Ascending aorta (tissue), 2 donors: ENCODE measurements at regions of chr17 and their contacts with region 1.

Region 1: DNA sequence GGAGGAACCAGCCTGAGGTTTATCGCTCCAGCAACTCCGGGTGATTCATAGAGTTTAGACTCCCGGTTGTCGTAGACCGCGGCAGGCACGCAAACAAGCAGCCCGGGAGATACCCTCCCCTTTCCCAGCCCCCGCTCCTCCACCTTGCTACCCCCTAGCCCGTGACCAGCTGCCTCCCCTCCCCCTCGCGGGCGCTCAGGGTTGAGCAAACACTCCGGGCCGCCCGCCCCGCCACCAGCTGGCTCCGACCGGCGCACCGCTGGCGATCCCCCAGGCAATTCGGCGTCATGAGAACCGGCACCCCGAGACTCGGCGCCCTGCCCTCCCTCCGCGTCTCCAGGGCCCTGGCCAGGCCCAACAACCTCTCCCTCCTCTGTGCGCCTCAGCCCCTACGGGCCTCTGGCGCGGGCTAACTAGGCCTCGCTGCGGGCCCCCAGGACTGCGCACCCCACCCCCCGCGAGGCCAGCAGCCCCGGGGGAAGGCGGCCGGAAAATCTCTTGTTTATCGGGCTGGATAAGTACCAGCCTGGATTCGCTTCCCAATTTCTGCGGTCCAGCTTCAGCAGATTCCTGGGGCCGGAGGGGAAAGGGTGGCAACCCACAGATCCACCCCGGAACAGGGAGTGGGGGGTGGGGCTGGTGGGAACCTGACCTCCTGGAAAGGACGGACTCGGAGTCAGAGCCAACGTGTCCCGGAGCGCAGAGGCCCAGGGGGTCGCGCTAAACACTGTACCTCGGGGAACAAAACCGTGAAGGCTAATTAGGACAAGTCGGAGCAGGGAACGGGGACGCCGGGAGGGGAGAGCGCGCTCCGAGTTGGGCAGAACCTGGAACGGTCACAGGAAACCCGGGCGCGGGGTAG is 951 bp upstream of the GPRC5C start:
- DNase-seq: peak; percentile 81 to 93
- H3K4me3 ChIP-seq: peak overlapping the region; percentile 68 to 95
- H3K27ac ChIP-seq: peak overlapping the region; percentile 97 to 99
- H3K4me1 ChIP-seq: peaks cover 9 to 45% of the 10 kb centered on the region in 2 donors
- H3K27me3 ChIP-seq: no peaks in the 10 kb centered on the region
- CTCF ChIP-seq: no peak

Region 2: DNA sequence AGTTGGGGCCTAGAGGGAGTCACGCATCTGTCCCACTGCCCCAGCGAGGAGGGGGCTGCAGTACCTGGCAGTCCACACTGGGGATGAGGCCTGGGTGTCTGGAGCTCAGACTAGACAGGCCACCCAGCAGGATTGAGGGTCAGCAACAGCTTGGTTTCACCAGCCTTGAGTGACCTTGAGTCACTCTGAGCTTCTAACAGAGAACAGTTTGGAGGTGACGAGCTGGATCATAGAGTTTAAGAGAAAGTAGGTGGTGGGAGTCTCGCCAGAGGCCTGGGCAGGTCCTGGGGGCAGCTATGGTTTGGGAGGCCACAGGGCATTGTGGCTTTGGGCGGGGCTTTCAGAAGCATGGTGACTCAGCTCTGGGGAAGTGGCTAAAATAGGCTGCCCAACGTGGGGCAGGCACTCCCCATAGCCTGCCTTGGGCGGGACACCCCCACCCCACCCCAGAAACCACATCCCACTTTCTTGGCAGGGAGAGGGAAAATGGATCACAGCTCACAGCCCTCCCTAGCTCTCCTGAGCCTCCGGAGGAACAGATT is 1139.6 kb before region 1 on chr17:
- intact Hi-C with region 1: loop called (anchors 5 kb)
- DNase-seq: peak; percentile 50 to 93
- H3K4me3 ChIP-seq: peak overlapping the region; percentile 36 to 42
- H3K27ac ChIP-seq: peak overlapping the region; percentile 96 to 99
- H3K4me1 ChIP-seq: peaks cover 34 to 82% of the 10 kb centered on the region in 2 donors
- H3K27me3 ChIP-seq: no peaks in the 10 kb centered on the region
- CTCF ChIP-seq: no peak

Region 3: GRCh38 chr17:74379495-74380085 is 51.3 kb before region 1 on chr17:
- intact Hi-C with region 1: loop called (anchors 1 kb)
- DNase-seq: peak; percentile 63 to 97
- H3K4me3 ChIP-seq: peak overlapping the region in 1 of 2 donors; percentile 57
- H3K27ac ChIP-seq: peak overlapping the region; percentile 28 to 76
- H3K4me1 ChIP-seq: peaks cover 12 to 15% of the 10 kb centered on the region in 2 donors
- H3K27me3 ChIP-seq: no peaks in the 10 kb centered on the region
- CTCF ChIP-seq: peak; percentile 86 to 99 (median 97)

Region 4: DNA sequence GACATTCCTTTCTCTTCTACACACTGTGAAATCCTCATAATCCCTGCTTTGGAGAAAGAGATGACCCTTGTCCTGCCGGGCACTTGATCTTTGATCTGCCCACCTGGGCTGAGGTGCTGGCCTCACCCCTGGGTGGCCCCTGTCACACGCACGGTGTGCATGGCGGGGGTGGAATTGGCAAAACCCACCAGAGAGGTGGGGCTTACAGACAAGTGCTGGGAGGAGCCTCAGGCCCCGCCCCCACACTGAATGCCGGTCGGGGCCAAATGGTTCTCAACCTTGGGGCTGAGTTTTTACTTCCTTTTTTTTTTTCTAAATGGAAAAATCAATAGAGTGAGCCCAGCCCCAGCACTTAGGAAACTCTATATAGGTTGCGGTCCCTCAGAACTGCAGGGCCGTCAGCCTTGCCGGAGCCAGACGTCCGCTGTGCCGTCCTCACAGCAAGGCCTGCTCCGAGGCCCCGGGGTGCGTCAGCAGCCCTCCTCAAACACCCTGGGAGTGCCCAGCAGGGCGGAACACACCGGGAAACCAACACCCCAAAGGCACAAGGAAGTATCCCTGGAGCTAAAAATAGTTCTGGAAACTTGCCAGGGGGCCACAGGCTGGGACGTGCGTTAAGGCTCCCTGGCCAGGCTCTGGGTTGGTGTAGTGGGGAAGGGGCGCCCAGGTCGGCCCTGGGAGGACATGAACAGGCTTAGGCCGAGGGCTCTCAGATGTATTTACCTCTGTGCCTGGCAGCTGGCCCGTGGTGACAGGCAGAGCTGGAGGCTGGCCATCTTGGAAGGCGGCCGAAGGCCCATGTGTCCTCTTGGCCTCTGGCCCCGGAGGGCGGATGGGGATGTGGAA is 12.0 kb after region 1 on chr17:
- intact Hi-C with region 1: loop called (anchors 1 kb)
- DNase-seq: peak; percentile 69 to 90
- H3K4me3 ChIP-seq: peak overlapping the region; percentile 14 to 49
- H3K27ac ChIP-seq: peak overlapping the region; percentile 94 to 98
- H3K4me1 ChIP-seq: peaks cover 23 to 58% of the 10 kb centered on the region in 2 donors
- H3K27me3 ChIP-seq: no peaks in the 10 kb centered on the region
- CTCF ChIP-seq: no peak

Region 5: GRCh38 chr17:74457146-74457819 is 26.3 kb after region 1 on chr17:
- intact Hi-C with region 1: loop called (anchors 1 kb)
- DNase-seq: peak in 1 of 2 donors; percentile 90
- H3K4me3 ChIP-seq: no peak overlapping the region
- H3K27ac ChIP-seq: no peak overlapping the region
- H3K4me1 ChIP-seq: peaks cover 19 to 22% of the 10 kb centered on the region in 2 donors
- H3K27me3 ChIP-seq: no peaks in the 10 kb centered on the region
- CTCF ChIP-seq: peak; percentile 97 to 99 (median 99)